GM12878 (cell line): ENCODE measurements at regions of chrX and their contacts with region 1.

Region 1: GRCh38 chrX:76253432-76253831 is 80.6 kb downstream of the PBDC1 start:
- DNase-seq: peak; percentile 30
- ATAC-seq: peak; percentile 95
- H3K4me3 ChIP-seq: no peak overlapping the region
- H3K27ac ChIP-seq: no peak overlapping the region
- H3K4me1 ChIP-seq: no peaks in the 10 kb centered on the region
- H3K27me3 ChIP-seq: no peaks in the 10 kb centered on the region
- CTCF ChIP-seq: peak; percentile 58 to 67 (median 59); a peak in 5 of 6 replicates
- EP300 ChIP-seq: no peak
- POLR2A ChIP-seq: no peak
- RAD21 ChIP-seq: peak; percentile 84

Region 2: GRCh38 chrX:75038925-75039324 is 1214.5 kb before region 1 on chrX:
- CTCF ChIA-PET with region 1: interaction called, 3 read pairs
- POLR2A ChIA-PET with region 1: no interaction called
- RAD21 ChIA-PET with region 1: no interaction called
- SMC1A ChIA-PET with region 1: no interaction called
- in situ Hi-C with region 1: loop called (anchors 25 kb)
- intact Hi-C with region 1: loop called (anchors 5 kb)
- DNase-seq: peak; percentile 11
- ATAC-seq: peak; percentile 83
- H3K4me3 ChIP-seq: no peak overlapping the region
- H3K27ac ChIP-seq: no peak overlapping the region
- H3K4me1 ChIP-seq: no peaks in the 10 kb centered on the region
- H3K27me3 ChIP-seq: no peaks in the 10 kb centered on the region
- CTCF ChIP-seq: peak; percentile 40 to 57 (median 42); a peak in 5 of 6 replicates
- EP300 ChIP-seq: no peak
- POLR2A ChIP-seq: no peak
- RAD21 ChIP-seq: peak; percentile 63

Region 3: DNA sequence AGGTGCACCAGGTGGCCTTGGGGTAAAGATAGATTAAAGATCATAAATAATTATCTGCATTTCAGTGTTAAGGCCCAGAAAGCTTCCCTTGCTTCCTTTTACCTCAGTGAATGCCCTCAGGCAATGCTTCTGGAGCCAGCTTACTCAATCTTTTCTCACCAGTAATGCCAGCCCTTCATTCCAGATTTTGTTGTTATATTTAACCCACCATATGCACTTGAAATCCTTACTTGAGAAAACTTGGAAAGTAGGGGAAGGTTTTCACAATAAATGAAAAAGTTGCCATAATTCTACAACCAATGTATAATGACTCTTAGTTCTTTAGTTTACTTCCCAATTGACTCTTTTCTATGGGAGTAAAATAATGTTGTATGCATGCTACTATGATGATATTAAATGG is 97.6 kb before region 1 on chrX:
- CTCF ChIA-PET with region 1: interaction called, 3 read pairs
- POLR2A ChIA-PET with region 1: no interaction called
- RAD21 ChIA-PET with region 1: interaction called, 3 read pairs
- SMC1A ChIA-PET with region 1: no interaction called
- in situ Hi-C with region 1: no loop called
- intact Hi-C with region 1: loop called (anchors 5 kb)
- DNase-seq: no peak
- ATAC-seq: no peak
- H3K4me3 ChIP-seq: no peak overlapping the region
- H3K27ac ChIP-seq: no peak overlapping the region
- H3K4me1 ChIP-seq: no peaks in the 10 kb centered on the region
- H3K27me3 ChIP-seq: no peaks in the 10 kb centered on the region
- CTCF ChIP-seq: no peak
- EP300 ChIP-seq: no peak
- POLR2A ChIP-seq: no peak
- RAD21 ChIP-seq: no peak

Region 4: GRCh38 chrX:76172325-76172893 is 81.0 kb before region 1 on chrX:
- CTCF ChIA-PET with region 1: no interaction called
- POLR2A ChIA-PET with region 1: no interaction called
- RAD21 ChIA-PET with region 1: interaction called, 3 read pairs
- SMC1A ChIA-PET with region 1: interaction called, 3 read pairs
- in situ Hi-C with region 1: no loop called
- intact Hi-C with region 1: loop called (anchors 5 kb)
- DNase-seq: no peak
- ATAC-seq: peak; percentile 60; the same call in 2 of the 3 replicates
- H3K4me3 ChIP-seq: peak overlapping the region; percentile 70; the same call in 1 of the 2 replicates
- H3K27ac ChIP-seq: peak overlapping the region; percentile 38
- H3K4me1 ChIP-seq: no peaks in the 10 kb centered on the region
- H3K27me3 ChIP-seq: no peaks in the 10 kb centered on the region
- CTCF ChIP-seq: no peak
- EP300 ChIP-seq: no peak
- POLR2A ChIP-seq: no peak
- RAD21 ChIP-seq: no peak